Activated CD4-positive, alpha-beta memory T cell treated with anti-CD3 and anti-CD28 coated beads, Interleukin-2, amount 10 ng/mL, durations not matched to agents 7 days and 5 days (primary cell): ENCODE measurements at regions of chr2 and their contacts with region 1.

Region 1: DNA sequence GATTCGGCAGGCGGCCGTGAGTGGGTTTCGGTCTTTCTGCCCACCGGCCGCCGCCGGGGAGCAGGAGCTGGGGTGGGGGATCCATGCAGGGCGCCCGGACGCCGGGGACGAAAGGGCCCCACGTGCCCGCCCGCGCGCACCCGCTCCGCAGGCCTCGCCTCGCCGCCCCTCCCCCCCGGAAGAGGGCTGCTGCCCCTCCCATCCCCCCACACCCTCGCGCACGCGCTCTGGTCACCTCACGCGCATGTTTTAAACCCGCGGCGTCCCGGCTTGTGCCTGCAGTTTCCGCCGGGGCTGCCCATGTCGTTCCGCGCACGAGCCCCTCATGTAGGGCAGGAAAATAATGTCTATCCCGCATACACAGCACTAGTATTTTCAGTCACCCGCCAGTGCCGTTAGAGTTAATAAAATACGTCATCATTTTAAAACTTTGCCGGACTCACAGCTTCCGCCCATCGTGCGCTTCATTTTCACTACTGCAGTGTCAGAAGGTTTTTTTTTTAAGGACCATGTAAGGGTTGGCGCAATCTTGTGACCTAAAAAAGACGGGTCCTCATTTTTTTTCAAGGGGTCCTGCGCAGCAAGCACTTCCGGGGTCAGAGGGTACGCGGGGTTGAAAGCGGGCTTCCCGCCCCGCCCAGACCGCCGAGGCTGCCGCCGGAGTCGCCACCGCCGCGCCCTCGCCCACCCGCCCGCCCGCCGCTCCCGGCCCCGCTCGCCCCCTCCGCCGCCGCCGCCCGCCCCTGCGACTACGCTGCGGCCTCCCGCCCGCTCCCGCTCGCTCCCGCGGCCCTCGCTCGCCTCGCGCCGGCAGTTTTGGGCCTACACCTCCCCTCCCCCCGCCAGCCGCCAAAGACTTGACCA is at the start of gene PCBP1:
- DNase-seq: peak; percentile 95
- H3K4me3 Mint-ChIP-seq: peak within 1 kb of the TSS; percentile 98
- H3K27ac Mint-ChIP-seq: peak within 1 kb of the TSS; percentile 100
- H3K4me1 Mint-ChIP-seq: peaks cover 59% of the 10 kb centered on the region
- H3K27me3 Mint-ChIP-seq: no peaks in the 10 kb centered on the region
- total RNA-seq, gene PCBP1: 475 to 483 TPM

Region 2: DNA sequence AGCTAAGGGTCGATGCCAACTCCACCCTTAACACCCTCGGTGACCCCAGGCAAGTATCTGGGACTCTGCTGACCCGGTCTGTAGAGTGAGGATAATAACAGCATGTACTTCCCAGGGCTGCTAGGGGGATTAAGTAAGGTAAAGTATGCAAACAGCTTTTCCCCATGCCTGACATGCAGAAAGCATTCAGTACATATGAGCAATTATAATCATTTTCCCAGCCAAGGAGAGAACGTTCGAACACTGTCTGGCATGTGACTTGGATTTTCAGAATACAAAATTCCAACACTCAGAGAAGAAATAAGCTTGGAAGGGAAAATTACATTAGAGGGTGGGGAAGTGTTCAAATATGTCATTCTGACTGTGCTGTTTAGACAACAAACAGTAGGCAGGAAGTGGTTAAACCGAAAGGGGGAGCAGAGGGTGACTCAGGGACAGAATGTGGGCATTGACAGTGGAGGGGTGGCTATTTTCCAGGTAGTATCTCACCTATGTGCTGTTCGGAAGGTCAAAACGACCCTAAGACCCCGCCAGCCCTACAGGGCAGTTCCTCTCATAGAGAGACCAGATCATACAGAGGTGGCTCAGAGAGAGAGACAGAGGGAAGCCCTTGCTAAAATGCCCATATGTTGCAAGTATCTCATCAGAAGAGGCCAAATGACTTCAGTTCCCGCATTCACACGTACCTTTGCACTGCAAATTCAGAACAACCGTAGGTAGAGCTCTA is 140.6 kb before region 1 on chr2:
- CTCF ChIA-PET with region 1: no interaction called
- POLR2A ChIA-PET with region 1: interaction called, 17 read pairs
- DNase-seq: peak; percentile 80
- H3K4me3 Mint-ChIP-seq: peak overlapping the region; percentile 12
- H3K27ac Mint-ChIP-seq: peak overlapping the region; percentile 94
- H3K4me1 Mint-ChIP-seq: peaks cover 56% of the 10 kb centered on the region
- H3K27me3 Mint-ChIP-seq: peaks cover 2% of the 10 kb centered on the region

Region 3: GRCh38 chr2:70043252-70043875 is 43.7 kb before region 1 on chr2:
- CTCF ChIA-PET with region 1: interaction called, 4 read pairs
- POLR2A ChIA-PET with region 1: interaction called, 63 read pairs
- DNase-seq: peak; percentile 89
- H3K4me3 Mint-ChIP-seq: peak overlapping the region; percentile 44
- H3K27ac Mint-ChIP-seq: peak overlapping the region; percentile 97
- H3K4me1 Mint-ChIP-seq: peaks cover 75% of the 10 kb centered on the region
- H3K27me3 Mint-ChIP-seq: no peaks in the 10 kb centered on the region

Region 4: DNA sequence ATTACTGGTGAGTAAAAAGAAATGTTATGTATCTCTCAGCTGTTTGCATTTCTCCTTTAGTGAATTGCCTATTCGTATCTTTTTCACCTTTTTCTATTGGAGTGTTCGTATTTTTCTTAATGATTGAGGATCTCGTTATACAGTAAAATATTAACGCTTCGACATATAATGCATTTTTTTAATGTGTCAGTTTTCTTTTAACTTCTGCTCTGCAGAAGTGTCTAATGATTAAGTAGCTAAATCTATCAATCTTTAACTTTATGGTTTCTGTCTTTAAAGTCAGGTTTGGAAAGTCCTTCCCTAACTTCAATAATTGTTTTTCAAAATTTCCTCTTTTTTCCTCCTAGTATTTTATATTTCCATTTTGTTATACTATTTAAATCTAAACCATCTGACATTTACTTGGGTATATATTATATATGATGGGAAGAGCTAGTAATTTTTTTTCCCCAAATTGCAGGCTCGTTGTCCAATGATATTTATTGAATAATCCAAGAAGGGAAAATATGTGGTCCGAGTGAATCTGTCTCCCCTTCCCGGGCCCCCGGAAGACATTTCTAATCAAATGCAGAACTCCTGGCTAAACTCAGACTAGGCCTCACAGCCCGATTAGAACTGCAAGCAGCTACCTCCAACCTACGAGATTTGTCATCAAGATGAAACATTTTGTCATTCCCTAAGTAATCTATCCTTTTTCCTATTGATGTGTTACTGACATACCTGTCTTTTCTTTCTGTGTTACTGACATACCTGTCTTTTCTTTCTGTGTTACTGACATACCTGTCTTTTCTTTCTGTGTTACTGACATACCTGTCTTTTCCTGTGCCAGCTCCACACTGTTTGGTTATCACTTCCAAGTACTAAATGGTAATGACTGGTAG is 17.4 kb after region 1 on chr2:
- CTCF ChIA-PET with region 1: interaction called, 12 read pairs
- POLR2A ChIA-PET with region 1: interaction called, 328 read pairs
- DNase-seq: peak; percentile 54
- H3K4me3 Mint-ChIP-seq: peak overlapping the region; percentile 72
- H3K27ac Mint-ChIP-seq: peak overlapping the region; percentile 90
- H3K4me1 Mint-ChIP-seq: peaks cover 56% of the 10 kb centered on the region
- H3K27me3 Mint-ChIP-seq: no peaks in the 10 kb centered on the region

Region 5: DNA sequence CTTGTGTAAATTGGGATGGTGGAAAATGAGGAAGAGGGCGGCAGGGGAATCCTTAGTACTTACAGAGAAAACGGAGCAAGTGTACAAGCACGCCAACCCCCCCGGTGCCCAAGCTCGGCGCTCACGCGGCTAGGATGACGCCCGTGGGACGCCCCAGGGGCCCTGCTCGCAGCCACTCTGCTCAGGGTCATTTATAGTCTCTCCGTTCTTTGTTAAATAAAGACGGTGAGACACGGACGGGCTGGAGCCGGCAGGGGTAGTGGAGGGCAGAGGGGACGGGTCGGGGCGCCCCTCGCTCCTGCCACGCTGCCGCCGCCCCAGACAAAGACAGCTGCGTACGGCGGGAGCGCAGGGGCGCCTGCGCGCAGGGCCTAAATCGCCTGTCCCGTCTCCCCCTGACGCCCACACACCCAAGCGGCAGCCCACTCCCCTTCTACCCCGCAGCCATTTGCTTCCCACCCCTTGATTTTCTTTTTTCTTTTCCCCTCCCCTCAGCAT is 38.0 kb after region 1 on chr2:
- CTCF ChIA-PET with region 1: interaction called, 8 read pairs
- POLR2A ChIA-PET with region 1: interaction called, 856 read pairs
- DNase-seq: peak; percentile 65
- H3K4me3 Mint-ChIP-seq: peak overlapping the region; percentile 84
- H3K27ac Mint-ChIP-seq: peak overlapping the region; percentile 99
- H3K4me1 Mint-ChIP-seq: peaks cover 71% of the 10 kb centered on the region
- H3K27me3 Mint-ChIP-seq: no peaks in the 10 kb centered on the region

Region 6: DNA sequence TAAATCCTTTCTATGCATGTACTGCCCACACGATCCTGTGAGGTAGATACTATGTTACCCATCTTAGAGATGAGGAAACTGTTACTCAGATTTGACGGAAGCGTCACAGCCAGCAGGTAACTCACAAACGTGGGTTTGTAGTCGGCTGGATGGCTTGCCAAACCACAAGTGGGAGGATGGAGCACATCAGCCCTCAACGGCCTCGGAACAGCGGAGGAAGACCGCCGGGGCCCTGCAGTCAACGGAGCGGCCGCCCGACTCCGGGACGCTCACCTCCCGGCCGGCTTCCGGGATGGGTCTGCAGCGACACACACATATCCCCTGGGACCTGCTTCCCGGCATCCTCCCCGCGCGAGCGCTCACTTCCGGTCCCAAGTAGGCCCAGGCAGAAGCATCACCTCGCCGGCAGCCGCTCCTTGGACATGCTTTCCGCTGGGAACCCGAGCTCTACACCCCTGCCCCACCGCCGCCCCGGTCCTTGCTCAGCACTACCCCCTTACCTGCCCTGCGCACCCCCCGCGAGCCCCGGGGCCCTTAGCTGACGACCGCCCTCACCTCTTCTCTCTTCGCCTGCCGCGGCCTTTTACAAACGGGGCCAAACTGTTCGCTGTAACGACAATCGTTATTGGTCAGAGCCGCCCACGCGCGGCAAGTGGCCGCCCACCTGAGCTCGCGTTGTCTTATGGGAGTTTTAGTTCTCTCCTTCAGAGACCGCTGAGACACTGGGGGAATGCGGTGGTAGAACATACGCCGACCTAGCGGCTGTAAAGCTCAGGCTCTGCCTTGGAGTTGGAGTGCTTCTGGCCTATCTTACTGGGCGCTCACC is 103.6 kb after region 1 on chr2 and contains the start of gene C2orf42:
- CTCF ChIA-PET with region 1: interaction called, 3 read pairs
- POLR2A ChIA-PET with region 1: interaction called, 24 read pairs
- DNase-seq: peak; percentile 96
- H3K4me3 Mint-ChIP-seq: peak within 1 kb of the TSS; percentile 82
- H3K27ac Mint-ChIP-seq: peak within 1 kb of the TSS; percentile 87
- H3K4me1 Mint-ChIP-seq: peaks cover 23% of the 10 kb centered on the region
- H3K27me3 Mint-ChIP-seq: no peaks in the 10 kb centered on the region
- total RNA-seq, gene C2orf42: 28.8 to 32.2 TPM